H1 (cell line): ENCODE measurements at regions of chr19 and their contacts with region 1.

Region 1: GRCh38 chr19:33394006-33394849 is 20.7 kb downstream of the CEBPG start:
- DNase-seq: no peak
- H3K4me3 ChIP-seq: no peak overlapping the region
- H3K27ac ChIP-seq: no peak overlapping the region
- H3K4me1 ChIP-seq: peaks cover 0 to 14% (median 8%) of the 10 kb centered on the region in 4 experiments; a peak in 4 of 7 replicates
- H3K27me3 ChIP-seq: no peaks in the 10 kb centered on the region
- CTCF ChIP-seq: no peak
- EP300 ChIP-seq: no peak
- POLR2A ChIP-seq: no peak
- RAD21 ChIP-seq: no peak

Region 2: DNA sequence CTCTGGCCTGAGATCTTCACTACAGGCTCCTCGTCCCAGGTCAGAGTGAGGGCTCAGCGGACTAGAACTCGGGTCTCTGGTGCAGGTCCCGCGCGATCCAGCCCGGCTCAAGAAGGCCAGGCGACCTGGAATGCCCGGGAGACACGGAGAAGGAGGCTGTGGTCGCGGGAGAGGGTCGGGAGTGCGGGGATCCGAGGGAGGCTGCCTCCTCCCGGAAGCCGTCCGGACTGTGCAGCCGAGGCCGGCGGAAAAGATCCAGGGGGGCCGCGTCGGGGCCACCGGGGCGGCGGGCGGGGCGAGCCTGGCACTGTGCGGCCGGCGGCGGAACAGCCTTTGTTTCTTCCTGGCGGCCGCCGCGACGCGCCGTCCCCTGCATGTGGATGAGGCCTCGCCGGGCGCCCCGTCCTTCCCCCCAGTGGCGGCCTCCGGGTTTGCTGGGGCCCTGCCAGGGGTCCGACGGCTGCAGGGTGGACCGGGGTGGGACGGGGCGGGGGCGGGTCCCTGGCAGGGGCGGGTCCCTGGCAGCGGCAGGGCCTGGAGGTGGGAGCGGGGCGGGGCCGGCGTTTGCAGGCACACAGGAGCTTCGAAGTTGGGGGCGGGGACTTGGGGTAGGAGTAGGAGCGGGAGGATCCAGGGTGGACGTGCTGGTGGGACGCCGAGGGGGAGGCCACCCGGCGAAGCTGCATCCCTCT is 167.5 kb before region 1 on chr19:
- CTCF ChIA-PET with region 1: interaction called, 13 read pairs
- POLR2A ChIA-PET with region 1: no interaction called
- DNase-seq: peak; percentile 59 to 87
- H3K4me3 ChIP-seq: peak overlapping the region; percentile 31 to 62 (median 41)
- H3K27ac ChIP-seq: no peak overlapping the region
- H3K4me1 ChIP-seq: peaks cover 0 to 9% (median 6%) of the 10 kb centered on the region in 4 experiments; a peak in 5 of 7 replicates
- H3K27me3 ChIP-seq: peaks cover 16 to 33% (median 30%) of the 10 kb centered on the region in 4 experiments
- CTCF ChIP-seq: no peak
- EP300 ChIP-seq: no peak
- POLR2A ChIP-seq: peak in 1 of 2 experiments; percentile 46; a peak in 1 of 3 replicates
- RAD21 ChIP-seq: no peak

Region 3: GRCh38 chr19:33447336-33448158 is 53.3 kb after region 1 on chr19:
- CTCF ChIA-PET with region 1: no interaction called
- POLR2A ChIA-PET with region 1: no interaction called
- DNase-seq: no peak
- H3K4me3 ChIP-seq: no peak overlapping the region
- H3K27ac ChIP-seq: no peak overlapping the region
- H3K4me1 ChIP-seq: no peaks in the 10 kb centered on the region
- H3K27me3 ChIP-seq: no peaks in the 10 kb centered on the region
- CTCF ChIP-seq: no peak
- EP300 ChIP-seq: no peak
- POLR2A ChIP-seq: no peak
- RAD21 ChIP-seq: no peak